ENCODE measurements at regions of chr10 and their contacts with region 1.

Region 1: DNA sequence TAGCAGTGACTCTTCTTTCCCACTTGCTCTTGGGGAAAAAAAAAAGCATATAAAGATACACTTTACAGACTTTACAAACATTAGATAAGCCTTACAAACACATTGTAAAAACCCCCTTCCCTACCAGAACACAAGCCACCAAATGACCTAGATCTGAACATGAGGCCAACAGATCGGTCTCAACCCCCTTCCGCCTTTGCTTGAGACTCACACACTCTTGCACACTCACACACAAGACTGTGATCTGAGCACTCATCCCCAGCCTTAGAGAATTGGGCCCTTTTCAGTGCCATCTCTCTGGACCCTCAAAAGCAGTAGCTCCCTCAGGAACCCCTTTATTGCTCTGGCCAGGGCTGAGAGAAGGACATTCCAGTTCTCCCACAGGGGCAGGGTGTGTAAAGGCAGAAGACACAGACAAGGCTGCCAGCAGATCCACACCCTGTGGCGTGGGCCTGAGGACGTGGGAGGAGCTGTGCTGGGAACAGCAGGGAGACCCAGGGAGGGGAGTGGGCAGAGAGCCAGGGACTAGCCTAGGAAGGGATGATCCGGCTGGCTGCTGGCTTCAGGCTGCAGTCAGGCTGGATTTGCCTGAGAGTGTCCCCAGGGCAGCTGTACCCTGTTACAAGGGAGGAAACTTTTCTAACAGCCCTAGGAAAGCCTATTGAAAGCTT is 206.7 kb downstream of the KIAA1217 start:
- DNase-seq: peak; percentile 90
- H3K4me3 ChIP-seq: no peak overlapping the region
- H3K27ac ChIP-seq: peak overlapping the region; percentile 63 to 78 (median 71)
- H3K4me1 ChIP-seq: peaks cover 11 to 35% (median 16%) of the 10 kb centered on the region in 4 donors
- H3K27me3 ChIP-seq: no peaks in the 10 kb centered on the region
- CTCF ChIP-seq: no peak
- EP300 ChIP-seq: no peak
- POLR2A ChIP-seq: peak; percentile 27

Region 2: DNA sequence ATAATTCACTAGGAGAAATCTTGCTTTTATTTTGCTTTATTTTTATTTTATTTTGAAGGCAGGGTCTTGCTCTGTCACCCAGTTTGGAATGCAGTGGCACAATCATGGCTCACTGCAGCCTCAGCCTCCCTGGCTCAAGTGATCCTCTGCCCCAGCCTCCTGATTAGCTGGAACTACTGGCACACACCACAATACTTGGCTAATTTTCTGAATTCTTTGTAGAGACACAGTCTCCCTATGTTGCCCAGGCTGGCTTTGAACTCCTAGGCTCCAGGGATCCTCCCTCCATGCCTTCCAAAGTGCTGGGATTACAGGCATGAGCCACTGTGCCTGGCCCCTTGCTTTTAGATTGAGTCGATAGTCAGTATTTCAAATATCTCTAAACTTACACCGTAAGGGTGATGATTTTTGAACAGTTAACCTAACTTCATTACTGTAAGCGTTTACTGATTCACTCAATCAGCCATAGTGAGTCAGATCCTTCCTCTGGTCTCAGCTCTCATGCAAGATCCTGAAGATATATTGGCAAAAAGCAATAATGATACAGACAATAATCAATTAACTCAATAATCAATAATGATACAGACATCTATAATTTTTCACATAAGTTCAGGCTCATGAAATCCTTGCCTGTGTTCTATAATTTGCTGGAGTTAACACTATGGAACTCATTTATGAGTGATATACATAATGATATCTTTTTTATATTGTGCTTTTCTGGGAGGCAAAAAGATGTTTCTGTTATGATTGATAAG is 32.9 kb after region 1 on chr10:
- in situ Hi-C with region 1: no loop called
- intact Hi-C with region 1: loop called (anchors 1 kb)
- DNase-seq: no peak
- H3K4me3 ChIP-seq: peak overlapping the region in 1 of 4 donors; percentile 7
- H3K27ac ChIP-seq: peak overlapping the region; percentile 6 to 67 (median 50)
- H3K4me1 ChIP-seq: peaks cover 0 to 20% (median 4%) of the 10 kb centered on the region in 4 donors
- H3K27me3 ChIP-seq: no peaks in the 10 kb centered on the region
- CTCF ChIP-seq: no peak
- EP300 ChIP-seq: no peak
- POLR2A ChIP-seq: no peak

Region 3: GRCh38 chr10:24503461-24504320 is 88.1 kb after region 1 on chr10:
- in situ Hi-C with region 1: loop called in 1 of 4 experiments (anchors 25 kb)
- intact Hi-C with region 1: no loop called
- DNase-seq: peak; percentile 65
- H3K4me3 ChIP-seq: no peak overlapping the region
- H3K27ac ChIP-seq: no peak overlapping the region
- H3K4me1 ChIP-seq: peaks cover 0 to 4% (median 0%) of the 10 kb centered on the region in 4 donors
- H3K27me3 ChIP-seq: no peaks in the 10 kb centered on the region
- CTCF ChIP-seq: peak; percentile 37 to 71 (median 60)
- EP300 ChIP-seq: no peak
- POLR2A ChIP-seq: no peak

Measured in transverse colon (tissue), 4 donors.